Sciatic nerve (tissue), 2 donors: ENCODE measurements at regions of chr7 and their contacts with region 1.

Region 1: GRCh38 chr7:77759294-77759889 is 38.8 kb downstream of the TMEM60 start:
- DNase-seq: peak; percentile 68
- ATAC-seq: peak; percentile 81

Region 2: DNA sequence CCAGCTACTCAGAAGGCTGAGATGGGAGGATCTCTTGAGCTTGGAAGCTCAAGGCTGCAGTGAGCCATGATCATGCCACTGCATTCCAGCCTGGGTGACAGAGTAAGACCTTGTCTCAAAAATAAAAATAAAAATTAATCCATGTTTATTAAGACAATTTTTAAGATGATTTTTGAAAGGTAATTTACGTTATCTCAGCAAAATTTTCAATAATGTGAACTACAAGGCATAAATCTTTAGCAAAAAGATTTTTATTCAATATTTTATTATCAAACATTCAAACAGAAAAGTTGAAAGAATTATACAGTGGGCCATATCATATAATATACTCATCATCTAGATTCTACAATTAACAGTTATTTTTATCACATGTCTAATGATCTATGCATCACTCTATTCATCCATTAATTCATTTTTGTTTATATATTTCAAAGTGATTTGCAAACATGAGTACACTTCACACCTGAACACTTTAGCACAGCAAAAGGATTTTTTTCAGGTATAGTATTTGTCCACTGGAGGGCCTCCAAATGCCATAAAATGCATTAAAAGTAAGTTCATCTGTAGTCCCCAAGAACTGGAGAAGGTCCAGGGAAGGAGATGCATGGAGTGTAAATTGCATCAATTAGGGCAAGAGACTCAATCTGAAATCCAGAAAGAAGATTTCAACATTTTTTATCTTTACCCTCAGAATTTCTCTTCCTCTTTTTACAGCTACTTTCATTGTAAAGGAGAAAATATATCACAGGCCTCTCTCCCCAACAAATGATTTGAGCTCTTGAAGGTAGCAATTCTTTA is 101.8 kb before region 1 on chr7:
- intact Hi-C with region 1: loop called (anchors 10 kb)
- DNase-seq: no peak
- ATAC-seq: no peak